Activated CD4-positive, alpha-beta T cell treated with anti-CD3 and anti-CD28 coated beads, Interleukin-2, amount 10 ng/mL, durations not matched to agents 24 days and 14 days (primary cell): ENCODE measurements at regions of chr3 and their contacts with region 1.

Region 1: DNA sequence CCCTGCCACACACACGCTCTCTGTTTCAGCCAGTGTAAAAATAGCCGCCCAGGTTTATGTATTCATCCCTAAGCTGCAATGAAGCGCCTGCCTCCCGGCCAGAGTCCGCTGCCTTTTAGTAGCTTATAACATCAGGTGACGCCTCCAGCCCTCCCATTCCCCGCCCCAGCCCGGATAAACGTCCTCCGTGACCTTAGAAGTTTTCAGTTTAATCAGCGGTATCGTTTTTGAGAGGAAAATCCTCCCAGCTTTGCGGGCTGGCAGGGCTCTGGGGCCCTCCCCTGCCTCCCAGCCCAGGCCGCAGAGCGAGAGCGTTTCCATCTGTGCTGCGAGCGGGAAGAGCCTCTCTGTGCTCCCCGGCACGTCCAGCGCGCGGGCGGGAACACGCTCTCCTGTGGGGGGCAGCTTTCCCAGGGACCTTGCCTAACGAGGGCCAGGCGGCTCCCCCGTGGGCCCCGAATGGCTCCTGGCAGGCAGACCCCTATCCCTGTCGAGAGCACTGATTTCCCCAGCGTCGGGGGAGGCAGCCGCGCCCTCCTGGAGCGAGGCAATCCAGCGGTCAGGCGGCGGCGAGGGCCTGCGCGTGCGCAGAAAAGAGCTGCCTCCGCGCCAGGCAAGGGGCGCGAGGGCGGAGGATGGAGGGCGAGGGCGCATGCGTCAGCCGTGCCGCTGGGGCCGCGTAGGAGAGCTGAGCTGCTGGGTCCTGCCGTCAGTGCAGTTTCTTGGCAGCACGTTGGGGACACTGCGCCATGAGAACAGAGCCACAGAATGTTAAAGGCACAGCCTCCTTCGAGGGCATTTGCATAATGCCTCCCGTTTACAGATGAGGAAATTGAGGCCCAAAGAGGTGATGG is 71.1 kb downstream of the CCNL1 start:
- DNase-seq: peak; percentile 98
- H3K4me3 Mint-ChIP-seq: peak overlapping the region; percentile 75
- H3K27ac Mint-ChIP-seq: peak overlapping the region; percentile 93
- H3K4me1 Mint-ChIP-seq: peaks cover 71% of the 10 kb centered on the region
- H3K27me3 Mint-ChIP-seq: no peaks in the 10 kb centered on the region

Region 2: GRCh38 chr3:156483961-156484787 is 604.7 kb before region 1 on chr3:
- intact Hi-C with region 1: loop called (anchors 1 kb)
- DNase-seq: peak; percentile 87
- H3K4me3 Mint-ChIP-seq: peak overlapping the region; percentile 81
- H3K27ac Mint-ChIP-seq: peak overlapping the region; percentile 87
- H3K4me1 Mint-ChIP-seq: peaks cover 32% of the 10 kb centered on the region
- H3K27me3 Mint-ChIP-seq: peaks cover 8% of the 10 kb centered on the region

Region 3: DNA sequence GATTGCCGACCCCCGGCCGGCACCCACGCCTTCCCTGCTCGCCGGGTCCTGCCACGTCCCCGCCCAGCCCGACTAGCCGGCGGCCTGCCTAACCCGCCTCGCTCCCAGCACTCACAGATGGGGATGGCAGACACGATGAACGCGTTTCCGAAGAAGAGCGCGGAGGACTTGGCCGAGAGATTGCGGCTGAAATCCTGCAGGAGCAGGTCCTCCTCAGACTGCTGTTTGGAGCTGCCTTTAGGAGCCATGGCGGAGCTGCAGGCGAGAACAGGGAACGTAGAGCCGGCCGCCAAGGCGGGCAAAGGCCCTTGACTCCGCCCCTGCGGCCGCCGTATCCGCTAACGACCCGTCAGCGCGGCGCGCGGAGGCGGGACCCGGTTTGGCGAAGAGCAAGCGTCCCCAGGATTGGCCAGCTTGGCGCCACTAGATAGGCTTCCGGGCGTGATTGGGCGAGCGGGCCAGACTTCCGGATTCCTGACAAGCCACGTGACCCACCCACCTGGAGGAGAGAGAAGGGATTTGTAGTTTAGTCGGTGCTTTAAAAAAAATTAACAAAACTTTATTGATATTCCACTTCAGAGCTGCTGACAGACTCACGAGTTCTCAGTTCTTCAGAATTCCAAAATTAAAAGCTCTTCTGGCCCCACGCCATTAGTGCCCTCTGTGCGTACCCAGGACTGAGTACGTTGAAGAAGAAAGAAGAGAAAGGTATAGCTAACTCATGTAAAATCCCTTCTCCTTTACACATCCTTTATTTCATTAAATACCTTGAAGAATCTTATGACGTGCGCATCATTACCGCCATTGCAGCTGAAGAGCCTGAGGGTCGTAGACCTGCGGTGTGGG is 533.8 kb before region 1 on chr3 and contains the start of gene SSR3:
- intact Hi-C with region 1: loop called (anchors 2 kb)
- DNase-seq: peak; percentile 100
- H3K4me3 Mint-ChIP-seq: peak within 1 kb of the TSS; percentile 97
- H3K27ac Mint-ChIP-seq: peak within 1 kb of the TSS; percentile 96
- H3K4me1 Mint-ChIP-seq: peaks cover 48% of the 10 kb centered on the region
- H3K27me3 Mint-ChIP-seq: no peaks in the 10 kb centered on the region
- total RNA-seq, gene SSR3: 151 and 153 TPM in 2 replicates

Region 4: DNA sequence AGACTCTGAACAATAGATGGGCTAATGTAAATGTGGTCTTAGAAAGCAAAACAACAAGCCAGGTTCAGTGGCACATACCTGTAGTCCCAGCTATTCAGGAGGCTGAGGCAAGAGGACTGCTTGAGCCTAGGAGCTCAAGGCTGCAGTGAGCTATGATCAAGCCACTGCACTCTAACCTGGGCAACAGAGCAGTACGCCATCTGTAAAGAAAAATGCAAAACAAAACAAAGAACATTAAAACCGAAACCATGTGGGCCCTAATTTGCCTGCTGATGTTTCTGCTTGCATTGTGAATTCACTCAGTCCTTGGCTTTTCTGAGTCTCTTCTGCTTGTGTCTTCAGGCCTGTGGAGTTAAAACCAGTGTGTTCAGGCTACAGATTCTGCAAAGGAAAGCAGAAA is 14.5 kb after region 1 on chr3:
- intact Hi-C with region 1: loop called (anchors 1 kb)
- DNase-seq: peak; percentile 67
- H3K4me3 Mint-ChIP-seq: peak overlapping the region; percentile 62
- H3K27ac Mint-ChIP-seq: peak overlapping the region; percentile 89
- H3K4me1 Mint-ChIP-seq: peaks cover 44% of the 10 kb centered on the region
- H3K27me3 Mint-ChIP-seq: no peaks in the 10 kb centered on the region

Region 5: DNA sequence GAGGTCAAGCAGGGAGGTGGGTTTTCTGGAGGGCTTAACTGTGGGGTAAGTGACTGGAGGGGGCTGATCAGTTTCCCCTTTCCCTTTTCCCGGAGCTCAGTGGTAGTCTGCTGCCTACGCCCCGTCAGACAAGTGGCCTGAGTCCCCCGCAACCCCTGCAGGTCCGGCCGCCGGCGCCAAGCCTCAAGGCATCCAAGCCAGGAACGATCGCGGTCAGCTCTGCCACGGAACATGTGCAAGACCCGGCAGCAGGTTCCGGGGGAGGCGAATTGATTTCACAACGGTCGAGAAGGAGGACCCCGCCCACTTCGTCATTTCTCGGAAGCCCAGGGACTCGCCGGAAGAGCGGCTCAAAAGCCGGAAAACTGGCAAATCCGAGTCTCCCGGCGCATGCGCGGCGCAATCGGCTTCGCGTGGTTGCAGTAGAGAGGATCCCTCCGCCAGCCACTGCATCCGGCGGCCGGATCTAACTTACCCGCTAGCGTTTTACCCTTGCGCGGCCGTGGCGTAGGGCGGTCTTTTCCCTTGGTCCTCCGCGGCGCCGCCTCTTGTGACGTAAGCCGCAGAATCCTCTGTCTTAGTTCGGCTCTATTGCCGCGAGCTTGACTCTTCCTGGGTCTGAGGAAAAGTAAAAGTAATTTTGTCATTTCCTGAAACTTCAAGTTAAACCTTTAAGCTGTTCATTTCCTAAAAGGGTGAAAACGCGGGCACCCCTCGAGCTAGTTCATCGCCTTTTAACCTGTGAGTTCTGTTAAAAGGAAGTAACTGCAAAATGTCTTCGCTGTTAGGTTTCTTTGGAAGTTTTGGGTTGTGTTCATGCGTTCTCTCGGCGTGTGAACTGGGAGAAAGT is 86.0 kb after region 1 on chr3:
- intact Hi-C with region 1: loop called (anchors 1 kb)
- DNase-seq: peak; percentile 99
- H3K4me3 Mint-ChIP-seq: peak overlapping the region; percentile 89
- H3K27ac Mint-ChIP-seq: peak overlapping the region; percentile 99
- H3K4me1 Mint-ChIP-seq: peaks cover 25% of the 10 kb centered on the region
- H3K27me3 Mint-ChIP-seq: peaks cover 2% of the 10 kb centered on the region